ENCODE measurements at regions of chr10 and their contacts with region 1.

Region 1: DNA sequence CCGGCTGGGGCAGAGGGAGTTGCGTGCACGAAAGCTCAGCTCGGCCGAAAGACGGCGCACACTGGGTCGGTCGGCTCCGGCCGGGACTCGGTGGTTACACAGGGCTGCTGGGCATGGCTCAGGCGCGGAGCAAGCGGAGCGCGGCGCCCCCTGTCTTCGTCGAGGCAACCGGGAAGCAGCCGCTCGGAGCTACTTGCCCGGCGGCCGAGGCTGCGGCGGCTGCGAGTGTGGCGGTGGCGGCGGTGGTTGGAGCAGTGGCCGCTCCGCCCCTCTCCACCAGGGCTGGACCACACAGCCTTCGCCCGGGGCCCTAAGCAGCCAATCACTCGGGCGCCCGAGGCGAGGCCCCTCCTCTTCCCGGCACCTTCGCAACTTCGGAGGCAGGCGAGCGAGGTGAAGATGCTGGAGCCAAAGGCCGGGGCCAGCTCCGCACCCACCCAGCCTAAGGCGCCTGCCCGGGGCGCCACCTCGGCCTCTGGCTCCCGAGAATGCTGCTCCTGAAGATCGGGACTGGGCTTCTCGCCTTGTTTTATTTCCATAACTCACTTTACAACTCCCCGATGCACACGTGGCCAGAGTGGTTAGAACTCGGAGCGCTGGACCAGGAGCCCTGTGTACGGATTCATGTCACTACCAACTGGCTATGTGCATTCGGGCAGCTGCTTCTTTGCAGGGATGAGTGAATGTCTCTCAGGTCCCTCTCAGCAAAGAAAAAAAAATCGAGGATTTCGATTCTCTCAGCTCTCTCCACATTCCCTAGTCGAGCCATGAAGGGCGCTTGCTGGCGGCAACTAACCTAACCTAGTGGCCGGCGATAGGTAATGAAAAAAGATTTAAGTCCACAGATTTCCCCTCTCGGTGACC is at the start of gene TLL2:
- DNase-seq: no peak
- ATAC-seq: peak; percentile 89
- H3K4me3 ChIP-seq: peak within 1 kb of the TSS; percentile 74
- H3K27ac ChIP-seq: no peak within 1 kb of the TSS
- H3K4me1 ChIP-seq: peaks cover 14% of the 10 kb centered on the region
- H3K27me3 ChIP-seq: peaks cover 3 to 6% of the 10 kb centered on the region in 2 experiments; a peak in 3 of 4 replicates
- CTCF ChIP-seq: peak; percentile 28 to 54 (median 52); a peak in 5 of 6 replicates
- EP300 ChIP-seq: no peak
- POLR2A ChIP-seq: 0 out of 2 replicates have a peak, but pooled peaks have one; percentile 38
- RAD21 ChIP-seq: 0 out of 2 replicates have a peak, but pooled peaks have one; percentile 9
- polyA plus RNA-seq, gene TLL2: 0.02 to 0.29 TPM

Region 2: DNA sequence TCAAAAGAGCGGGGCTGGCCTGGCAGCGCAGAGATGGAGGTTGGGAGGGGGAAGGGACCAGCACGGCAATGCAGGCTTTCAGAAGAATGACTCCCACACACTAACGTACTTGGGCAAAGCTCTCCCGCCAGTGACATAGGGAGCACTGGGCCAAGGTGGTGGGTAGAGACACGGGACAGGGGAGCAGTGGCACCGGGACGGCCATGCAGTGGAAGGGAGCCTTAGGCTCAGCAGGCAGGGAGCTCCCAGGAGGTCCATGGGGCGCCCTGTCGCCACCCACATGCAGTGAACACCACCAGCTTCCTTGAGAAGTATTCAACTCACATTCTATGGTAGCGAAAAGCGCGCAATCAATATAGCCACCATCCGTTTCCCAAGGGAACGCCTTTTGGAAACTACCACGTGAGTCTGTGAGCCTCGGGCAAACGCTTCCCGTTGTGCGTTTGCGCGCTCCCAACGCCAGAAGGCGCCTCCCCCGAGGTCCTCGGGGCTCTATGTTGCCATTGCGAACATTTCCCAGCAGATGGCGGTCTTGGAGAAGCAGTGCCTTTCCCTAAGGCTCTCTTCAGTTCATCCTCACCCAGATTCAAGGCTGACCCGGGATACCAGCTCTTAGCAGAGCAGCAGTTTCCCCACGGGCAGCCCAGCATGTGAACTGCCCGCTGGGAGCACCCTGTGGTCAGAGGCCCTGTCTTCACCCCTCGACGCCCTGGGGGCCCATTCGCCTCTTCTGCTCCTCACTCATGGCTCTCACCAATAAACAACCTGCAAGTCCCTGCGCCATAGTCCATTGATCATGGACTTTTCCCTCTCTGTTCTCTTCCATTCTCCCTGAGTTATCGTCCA is 138.7 kb before region 1 on chr10:
- CTCF ChIA-PET with region 1: interaction called, 64 read pairs
- POLR2A ChIA-PET with region 1: no interaction called
- RAD21 ChIA-PET with region 1: interaction called, 14 read pairs
- SMC1A ChIA-PET with region 1: interaction called, 9 read pairs
- in situ Hi-C with region 1: no loop called
- intact Hi-C with region 1: loop called (anchors 1 kb)
- DNase-seq: peak; percentile 45
- ATAC-seq: peak; percentile 91
- H3K4me3 ChIP-seq: peak overlapping the region; percentile 68; the same call in 1 of the 2 replicates
- H3K27ac ChIP-seq: no peak overlapping the region
- H3K4me1 ChIP-seq: peaks cover 8% of the 10 kb centered on the region
- H3K27me3 ChIP-seq: no peaks in the 10 kb centered on the region; a peak in 1 of 4 replicates
- CTCF ChIP-seq: peak; percentile 98 to 100 (median 99)
- EP300 ChIP-seq: no peak
- POLR2A ChIP-seq: no peak
- RAD21 ChIP-seq: peak; percentile 87

Region 3: DNA sequence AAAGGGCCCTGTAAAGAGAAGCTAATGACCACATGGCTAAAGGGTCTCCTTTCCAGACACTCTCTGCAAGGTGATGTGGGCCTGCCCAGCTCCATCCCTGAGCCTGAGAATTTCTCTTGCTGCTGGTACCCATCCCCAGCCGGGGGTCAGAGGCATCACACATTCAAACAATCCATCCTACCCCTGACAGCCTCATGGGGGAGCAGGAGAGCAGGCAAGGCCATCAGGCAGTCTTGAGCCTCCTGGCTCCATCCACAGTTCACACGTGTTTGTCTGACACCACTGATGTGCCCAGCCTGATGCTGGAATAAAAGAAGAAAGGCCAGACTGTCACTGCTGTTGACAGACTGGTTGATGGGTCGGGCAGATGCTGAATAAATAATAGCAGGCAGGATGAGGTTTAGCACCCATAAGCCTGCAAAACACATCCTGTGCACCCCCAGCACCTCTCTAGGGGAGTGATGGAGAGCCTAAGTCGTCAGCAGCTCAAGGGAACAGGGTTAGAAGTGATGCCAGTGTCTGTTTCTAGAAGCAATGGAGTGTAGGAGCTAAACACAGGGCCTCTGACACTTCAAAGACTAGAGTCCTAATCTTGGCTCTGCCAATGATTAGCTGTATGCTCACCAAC is 43.7 kb before region 1 on chr10:
- CTCF ChIA-PET with region 1: interaction called, 22 read pairs
- POLR2A ChIA-PET with region 1: no interaction called
- RAD21 ChIA-PET with region 1: interaction called, 3 read pairs
- SMC1A ChIA-PET with region 1: interaction called, 4 read pairs
- in situ Hi-C with region 1: no loop called
- intact Hi-C with region 1: no loop called
- DNase-seq: no peak
- ATAC-seq: peak; percentile 92
- H3K4me3 ChIP-seq: no peak overlapping the region
- H3K27ac ChIP-seq: no peak overlapping the region
- H3K4me1 ChIP-seq: no peaks in the 10 kb centered on the region
- H3K27me3 ChIP-seq: peaks cover 0 to 2% of the 10 kb centered on the region in 2 experiments; a peak in 2 of 4 replicates
- CTCF ChIP-seq: peak; percentile 64 to 78 (median 75)
- EP300 ChIP-seq: no peak
- POLR2A ChIP-seq: no peak
- RAD21 ChIP-seq: peak; percentile 61

Region 4: GRCh38 chr10:96496281-96496925 is 17.5 kb before region 1 on chr10:
- CTCF ChIA-PET with region 1: interaction called, 26 read pairs
- POLR2A ChIA-PET with region 1: no interaction called
- RAD21 ChIA-PET with region 1: interaction called, 5 read pairs
- SMC1A ChIA-PET with region 1: interaction called, 10 read pairs
- in situ Hi-C with region 1: no loop called
- intact Hi-C with region 1: no loop called
- DNase-seq: no peak
- ATAC-seq: peak; percentile 37; the same call in 1 of the 3 replicates
- H3K4me3 ChIP-seq: no peak overlapping the region
- H3K27ac ChIP-seq: no peak overlapping the region
- H3K4me1 ChIP-seq: no peaks in the 10 kb centered on the region
- H3K27me3 ChIP-seq: no peaks in the 10 kb centered on the region; a peak in 1 of 4 replicates
- CTCF ChIP-seq: no peak
- EP300 ChIP-seq: no peak
- POLR2A ChIP-seq: no peak
- RAD21 ChIP-seq: no peak

Region 5: DNA sequence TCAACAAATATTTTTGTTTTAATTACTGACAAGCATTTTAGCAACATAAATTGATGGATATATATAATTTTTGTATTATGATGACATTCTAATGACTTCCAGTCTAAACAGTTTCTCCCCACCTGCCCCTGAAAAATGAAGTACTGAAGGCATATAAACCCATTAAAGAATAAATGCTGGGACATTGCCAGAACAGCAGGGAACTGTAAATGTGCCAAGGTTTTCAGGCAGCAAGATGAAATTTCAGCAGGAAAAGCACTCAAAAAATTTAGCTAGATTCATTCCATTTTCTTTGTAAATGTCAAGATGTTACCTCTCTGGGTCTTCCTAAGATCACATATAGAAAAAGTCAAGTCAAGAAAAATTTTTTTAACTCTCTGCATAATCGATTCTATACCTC is 10.8 kb after region 1 on chr10:
- CTCF ChIA-PET with region 1: interaction called, 7 read pairs
- POLR2A ChIA-PET with region 1: interaction called, 5 read pairs
- RAD21 ChIA-PET with region 1: interaction called, 4 read pairs
- SMC1A ChIA-PET with region 1: interaction called, 11 read pairs
- in situ Hi-C with region 1: no loop called
- intact Hi-C with region 1: no loop called
- DNase-seq: no peak
- ATAC-seq: no peak
- H3K4me3 ChIP-seq: no peak overlapping the region
- H3K27ac ChIP-seq: no peak overlapping the region
- H3K4me1 ChIP-seq: no peaks in the 10 kb centered on the region
- H3K27me3 ChIP-seq: no peaks in the 10 kb centered on the region
- CTCF ChIP-seq: no peak
- EP300 ChIP-seq: no peak
- POLR2A ChIP-seq: no peak
- RAD21 ChIP-seq: no peak